ENCODE measurements at regions of chr3 and their contacts with region 1.

Region 1: GRCh38 chr3:14602006-14602803 is 49.4 kb upstream of the CCDC174 start:
- DNase-seq: no peak
- ATAC-seq: peak in 1 of 4 donors; percentile 19
- H3K4me3 ChIP-seq: peak overlapping the region in 10 of 12 donors; percentile 19 to 48 (median 34)
- H3K27ac ChIP-seq: no peak overlapping the region
- H3K4me1 ChIP-seq: peaks cover 0 to 17% (median 0%) of the 10 kb centered on the region in 12 donors
- H3K27me3 ChIP-seq: peaks cover 16 to 72% (median 27%) of the 10 kb centered on the region in 9 donors
- CTCF ChIP-seq: peak in 1 of 12 donors; percentile 13
- POLR2A ChIP-seq: no peak

Region 2: DNA sequence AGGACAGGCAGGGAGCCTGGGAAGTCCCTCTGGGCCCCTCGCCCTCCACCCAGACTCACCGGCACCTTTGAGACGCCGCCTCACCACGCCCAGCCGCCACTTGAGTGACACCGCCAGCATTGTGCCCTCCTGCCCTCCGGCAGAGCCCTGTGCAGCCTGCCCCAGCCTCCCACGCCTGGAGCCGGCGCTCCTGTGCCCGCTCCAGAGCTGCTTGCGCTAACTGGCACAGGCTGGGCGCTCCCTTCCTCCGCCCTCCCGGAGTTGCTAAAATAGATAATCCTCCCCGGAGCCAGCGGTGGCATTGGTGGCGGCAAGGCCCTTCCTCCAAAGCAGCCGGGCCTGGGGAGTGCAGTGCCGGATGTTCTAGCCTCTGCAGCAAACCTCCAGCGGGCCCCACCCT is 46.4 kb before region 1 on chr3:
- intact Hi-C with region 1: loop called in 1 of 10 experiments (anchors 10 kb)
- DNase-seq: peak in 4 of 5 donors; percentile 54 to 73 (median 58)
- ATAC-seq: peak; percentile 67 to 90 (median 88)
- H3K4me3 ChIP-seq: peak overlapping the region in 10 of 12 donors; percentile 2 to 50 (median 40)
- H3K27ac ChIP-seq: peak overlapping the region in 5 of 12 donors; percentile 20 to 63 (median 31)
- H3K4me1 ChIP-seq: peaks cover 0 to 37% (median 7%) of the 10 kb centered on the region in 12 donors
- H3K27me3 ChIP-seq: peaks cover 0 to 19% (median 0%) of the 10 kb centered on the region in 9 donors
- CTCF ChIP-seq: no peak
- POLR2A ChIP-seq: no peak

Region 3: DNA sequence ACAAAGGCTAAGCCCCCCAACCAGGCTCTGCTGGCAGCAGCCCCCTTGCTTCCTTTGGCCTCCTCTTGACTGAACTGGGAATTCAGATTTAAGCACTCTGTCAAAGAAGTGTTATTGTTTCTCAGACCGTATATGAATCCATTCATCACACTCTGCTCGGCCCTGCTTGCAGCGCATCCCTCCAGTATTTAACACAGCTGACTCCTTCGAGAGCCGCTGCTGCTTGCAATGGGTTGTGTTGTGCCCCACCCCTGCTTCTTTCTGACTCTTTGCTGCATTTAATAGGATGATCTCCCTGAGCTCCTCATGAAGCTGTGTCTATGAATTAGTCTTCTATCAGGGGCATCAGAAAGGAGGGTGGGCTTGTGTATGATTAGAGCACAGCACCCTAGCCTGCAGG is 103.9 kb after region 1 on chr3:
- intact Hi-C with region 1: no loop called
- DNase-seq: no peak
- ATAC-seq: no peak
- H3K4me3 ChIP-seq: no peak overlapping the region
- H3K27ac ChIP-seq: no peak overlapping the region
- H3K4me1 ChIP-seq: no peaks in the 10 kb centered on the region
- H3K27me3 ChIP-seq: no peaks in the 10 kb centered on the region
- CTCF ChIP-seq: no peak
- POLR2A ChIP-seq: no peak

Region 4: GRCh38 chr3:14890476-14890875 is 288.3 kb after region 1 on chr3:
- intact Hi-C with region 1: no loop called
- DNase-seq: no peak
- ATAC-seq: peak in 2 of 4 donors; percentile 30 to 31
- H3K4me3 ChIP-seq: no peak overlapping the region
- H3K27ac ChIP-seq: no peak overlapping the region
- H3K4me1 ChIP-seq: peaks cover 0 to 27% (median 11%) of the 10 kb centered on the region in 12 donors
- H3K27me3 ChIP-seq: peaks cover 0 to 11% (median 0%) of the 10 kb centered on the region in 9 donors
- CTCF ChIP-seq: no peak
- POLR2A ChIP-seq: no peak